ENCODE measurements at regions of chr6 and their contacts with region 1.

Region 1: DNA sequence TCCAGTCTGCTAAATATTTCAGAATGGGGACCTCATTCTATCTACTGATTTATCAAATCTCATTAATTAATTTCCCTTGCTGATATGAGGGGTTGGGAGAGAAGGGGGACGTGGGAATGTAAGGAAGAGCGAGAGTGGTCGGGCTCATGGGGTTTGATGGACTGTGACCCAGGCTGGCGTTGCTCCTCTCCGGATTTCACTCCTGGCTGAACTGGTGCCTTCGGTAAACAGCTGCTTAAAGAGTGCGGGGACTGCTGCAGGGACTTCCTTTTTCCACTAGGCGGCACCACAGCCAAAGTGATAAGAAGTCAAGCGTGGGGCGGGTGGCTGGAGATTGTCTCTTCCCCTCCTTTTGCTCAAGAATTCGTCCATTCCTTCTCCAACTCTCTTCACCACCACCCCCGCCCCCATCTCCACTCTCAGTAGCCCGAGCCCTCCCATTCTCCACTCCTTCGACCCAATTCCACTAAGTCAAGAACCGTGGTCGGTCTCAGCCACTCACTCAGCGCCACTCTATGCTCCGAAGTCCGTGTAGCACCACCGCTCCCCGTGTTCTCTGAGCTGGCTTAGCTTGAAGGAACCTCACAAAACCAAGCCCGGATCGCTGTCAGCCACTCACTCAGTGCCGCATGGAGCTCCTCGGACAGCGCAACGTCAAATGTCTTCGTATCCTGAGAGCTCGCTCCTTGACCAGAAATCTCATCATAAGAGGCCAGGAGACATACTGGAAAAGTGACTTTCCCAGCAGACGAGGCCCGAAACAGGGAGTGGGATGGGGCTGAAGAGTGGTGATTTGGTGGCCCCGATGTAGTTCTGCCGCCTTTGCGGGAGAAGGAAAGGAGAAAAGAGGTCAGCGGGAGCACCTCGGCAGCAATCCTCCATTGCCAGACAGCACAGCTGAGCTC is 9.7 kb downstream of the TRIM31 start:
- DNase-seq: peak; percentile 72 to 85
- H3K4me3 ChIP-seq: peak overlapping the region; percentile 55; the same call in 1 of the 2 replicates
- H3K27ac ChIP-seq: no peak overlapping the region
- H3K4me1 ChIP-seq: peaks cover 54% of the 10 kb centered on the region
- H3K27me3 ChIP-seq: no peaks in the 10 kb centered on the region
- CTCF ChIP-seq: peak; percentile 94

Region 2: DNA sequence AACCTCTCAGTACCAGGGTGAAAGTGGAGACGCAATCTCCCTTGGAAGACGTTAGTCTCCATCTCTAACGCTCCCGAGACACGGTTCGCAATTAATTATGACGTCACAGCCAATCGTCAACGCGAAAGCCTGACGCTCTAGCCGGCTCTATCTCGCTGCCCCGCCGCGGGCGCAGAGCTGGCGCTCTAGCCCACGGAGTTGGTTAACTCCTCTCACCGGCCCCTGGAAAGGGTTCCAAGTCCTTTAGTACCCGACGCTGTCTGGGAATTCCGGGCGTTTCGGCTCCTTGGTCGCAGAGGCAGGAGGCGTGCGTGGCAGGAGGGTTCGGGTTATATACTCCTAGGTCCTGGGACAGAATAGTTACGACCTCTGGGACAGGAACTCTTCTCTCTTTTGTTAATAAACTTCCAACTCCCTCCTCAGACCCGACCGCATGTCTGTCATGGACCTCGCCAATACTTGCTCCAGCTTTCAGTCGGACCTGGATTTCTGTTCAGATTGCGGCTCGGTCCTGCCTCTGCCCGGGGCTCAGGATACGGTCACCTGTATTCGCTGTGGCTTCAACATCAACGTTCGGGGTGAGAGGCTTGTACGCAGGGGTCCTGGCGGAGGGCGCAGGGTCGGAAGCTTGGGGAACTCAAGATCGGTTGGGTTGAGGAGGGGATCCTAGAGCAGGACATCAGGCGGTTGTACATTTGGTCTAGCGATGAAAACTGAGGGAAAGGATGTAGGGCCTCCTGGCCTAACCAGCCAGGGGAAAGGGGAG is 41.9 kb before region 1 on chr6 and contains the start of gene POLR1H:
- CTCF ChIA-PET with region 1: interaction called, 7 read pairs
- POLR2A ChIA-PET with region 1: interaction called, 6 read pairs
- intact Hi-C with region 1: loop called (anchors 1 kb)
- DNase-seq: peak; percentile 88 to 90
- H3K4me3 ChIP-seq: peak within 1 kb of the TSS; percentile 95
- H3K27ac ChIP-seq: peak within 1 kb of the TSS; percentile 35; the same call in 1 of the 2 replicates
- H3K4me1 ChIP-seq: peaks cover 24% of the 10 kb centered on the region
- H3K27me3 ChIP-seq: no peaks in the 10 kb centered on the region
- CTCF ChIP-seq: no peak
- total RNA-seq, gene POLR1H: 33.3 and 37.6 TPM in 2 replicates

Region 3: GRCh38 chr6:30075161-30075986 is 27.8 kb before region 1 on chr6 and contains the start of gene RNF39:
- CTCF ChIA-PET with region 1: no interaction called
- POLR2A ChIA-PET with region 1: interaction called, 5 read pairs
- intact Hi-C with region 1: loop called (anchors 1 kb)
- DNase-seq: no peak
- H3K4me3 ChIP-seq: peak within 1 kb of the TSS; percentile 81
- H3K27ac ChIP-seq: peak within 1 kb of the TSS; percentile 89
- H3K4me1 ChIP-seq: peaks cover 36% of the 10 kb centered on the region
- H3K27me3 ChIP-seq: no peaks in the 10 kb centered on the region
- CTCF ChIP-seq: peak; percentile 71
- total RNA-seq, gene RNF39: 7.3 and 7.5 TPM in 2 replicates

Region 4: DNA sequence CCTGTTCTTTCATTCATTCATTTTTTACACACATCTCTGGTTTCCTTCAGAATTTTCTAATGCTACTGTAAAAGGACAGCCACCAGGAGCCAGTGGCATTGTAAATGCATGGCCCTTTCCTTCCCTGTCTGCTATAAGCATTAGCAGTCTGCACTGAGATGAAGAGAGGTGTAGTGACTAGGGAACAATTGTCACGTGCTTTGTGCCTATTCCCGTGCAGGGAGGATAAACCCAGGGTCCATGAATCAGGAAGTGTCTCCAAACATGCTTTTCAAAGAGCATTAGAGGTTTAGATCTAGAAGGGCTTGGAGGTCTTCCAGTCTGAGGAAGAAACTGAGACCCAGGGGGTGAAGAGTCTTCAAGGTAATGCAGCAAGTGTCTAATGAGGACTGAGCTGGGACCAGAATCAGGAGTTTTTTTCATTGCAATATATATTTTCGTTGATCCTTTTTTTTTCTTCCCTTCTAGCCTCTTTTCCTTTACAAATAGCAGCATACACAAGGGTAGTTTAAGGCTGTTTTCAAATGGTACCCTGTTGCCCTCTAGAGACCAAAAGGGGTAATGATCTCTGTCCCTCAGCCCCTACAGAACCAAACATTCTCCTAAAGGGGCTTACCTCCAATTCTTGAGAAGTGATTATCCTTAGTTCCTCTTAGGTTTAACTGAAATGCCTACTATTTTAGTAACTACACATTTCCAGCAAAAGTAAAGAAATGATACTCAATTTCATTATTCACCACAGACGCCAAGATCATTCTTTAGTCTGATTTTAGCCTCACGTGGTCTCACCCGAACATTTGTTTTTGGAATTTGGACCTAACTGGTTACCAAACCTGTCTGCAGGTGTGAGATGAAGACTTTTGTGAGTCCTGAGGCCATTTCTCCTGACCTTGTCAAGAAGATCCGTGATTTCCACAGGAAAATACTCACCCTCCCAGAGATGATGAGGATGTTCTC is 66.7 kb after region 1 on chr6:
- CTCF ChIA-PET with region 1: no interaction called
- POLR2A ChIA-PET with region 1: no interaction called
- intact Hi-C with region 1: loop called (anchors 1 kb)
- DNase-seq: peak; percentile 11 to 51
- H3K4me3 ChIP-seq: no peak overlapping the region
- H3K27ac ChIP-seq: no peak overlapping the region
- H3K4me1 ChIP-seq: no peaks in the 10 kb centered on the region
- H3K27me3 ChIP-seq: peaks cover 28% of the 10 kb centered on the region
- CTCF ChIP-seq: peak; percentile 87

Region 5: DNA sequence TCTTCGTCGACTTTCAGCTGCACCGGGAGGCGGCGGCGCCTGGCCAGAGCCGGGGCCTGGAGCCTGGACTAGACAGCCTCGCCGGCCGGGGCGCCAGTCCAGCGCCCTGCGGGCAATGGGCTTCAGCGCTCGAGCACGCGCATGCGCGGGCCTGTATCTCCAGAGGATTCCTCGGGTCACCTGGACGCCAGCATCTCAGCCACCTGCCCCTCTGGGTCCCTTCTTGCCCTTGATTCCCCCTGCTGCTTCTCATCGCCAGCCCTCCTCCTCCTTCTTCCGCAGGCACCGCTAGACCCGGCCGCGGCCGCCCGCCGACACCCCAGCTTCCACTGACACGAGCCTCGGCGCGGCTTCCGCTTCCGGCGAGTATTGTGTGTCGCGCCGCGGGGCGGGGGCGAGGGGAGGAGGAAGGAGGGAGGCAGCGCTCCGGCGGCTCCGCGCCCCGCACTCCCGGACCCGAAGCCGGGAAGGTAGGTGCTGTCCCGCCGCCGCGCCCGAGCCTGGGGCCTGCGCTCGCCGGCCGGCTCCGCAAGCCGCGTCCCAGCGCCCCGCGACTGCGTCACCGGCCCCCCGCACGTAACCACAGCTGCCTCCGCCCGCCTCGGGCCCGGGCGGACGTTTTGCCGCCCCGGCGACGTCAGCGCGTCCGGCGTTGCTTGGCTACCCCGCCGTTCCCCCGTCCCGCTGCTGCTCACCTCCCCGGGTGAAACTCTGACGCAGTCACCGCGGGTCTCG is 223.5 kb after region 1 on chr6 and contains the start of gene TRIM39:
- CTCF ChIA-PET with region 1: no interaction called
- POLR2A ChIA-PET with region 1: no interaction called
- intact Hi-C with region 1: loop called (anchors 5 kb)
- DNase-seq: peak; percentile 62 to 86
- H3K4me3 ChIP-seq: peak within 1 kb of the TSS; percentile 91
- H3K27ac ChIP-seq: peak within 1 kb of the TSS; percentile 82
- H3K4me1 ChIP-seq: peaks cover 20% of the 10 kb centered on the region
- H3K27me3 ChIP-seq: no peaks in the 10 kb centered on the region
- CTCF ChIP-seq: no peak
- total RNA-seq, gene TRIM39: 12.5 and 14.4 TPM in 2 replicates

Measured in PC-9 (cell line).